ENCODE measurements at regions of chr1 and their contacts with region 1.

Region 1: DNA sequence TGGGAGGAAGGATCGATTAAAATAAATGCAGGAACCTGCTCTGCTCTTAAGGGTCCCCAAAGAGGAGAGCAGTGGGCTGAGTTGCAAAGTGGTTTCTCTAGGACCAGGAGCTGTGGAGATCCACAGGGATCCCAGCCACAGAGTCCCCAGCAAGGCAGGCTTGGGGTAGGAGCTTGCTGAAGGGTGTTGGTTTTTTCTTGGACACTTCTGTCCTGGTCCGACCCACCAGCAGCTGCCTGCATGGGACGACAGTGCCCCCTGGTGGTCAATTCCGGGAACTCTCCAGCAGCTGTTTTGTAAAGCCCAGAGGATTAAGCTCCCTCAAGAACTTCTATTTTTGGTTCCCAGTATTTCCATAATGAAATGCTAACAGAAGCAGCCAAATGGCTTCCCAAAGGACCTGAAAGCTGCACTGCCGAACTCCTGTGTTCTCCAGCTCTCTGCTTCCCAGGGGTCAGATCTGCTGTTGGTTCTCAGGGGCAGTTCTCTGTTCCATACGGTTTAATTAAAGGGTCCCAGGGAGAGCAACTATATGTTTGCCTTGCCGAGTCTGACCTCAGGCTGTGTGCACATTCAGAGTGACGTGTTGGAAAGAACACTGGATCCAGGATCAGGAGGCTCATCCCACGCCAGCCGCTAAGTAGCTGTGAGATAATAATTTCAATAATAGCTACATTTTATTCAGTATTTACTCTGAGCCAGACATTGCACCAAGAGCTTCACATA is 23.2 kb downstream of the NENF start:
- DNase-seq: peak; percentile 80 to 82
- ATAC-seq: peak; percentile 84 to 91
- H3K4me3 ChIP-seq: no peak overlapping the region
- H3K27ac ChIP-seq: no peak overlapping the region
- H3K4me1 ChIP-seq: no peaks in the 10 kb centered on the region
- CTCF ChIP-seq: peak; percentile 97
- EP300 ChIP-seq: no peak
- POLR2A ChIP-seq: no peak
- RAD21 ChIP-seq: peak; percentile 96 to 98

Region 2: GRCh38 chr1:212045981-212046380 is 410.0 kb before region 1 on chr1:
- CTCF ChIA-PET with region 1: interaction called, 13 read pairs
- POLR2A ChIA-PET with region 1: no interaction called
- DNase-seq: no peak
- ATAC-seq: no peak
- H3K4me3 ChIP-seq: no peak overlapping the region
- H3K27ac ChIP-seq: no peak overlapping the region
- H3K4me1 ChIP-seq: peaks cover 3% of the 10 kb centered on the region
- CTCF ChIP-seq: no peak
- EP300 ChIP-seq: no peak
- POLR2A ChIP-seq: no peak
- RAD21 ChIP-seq: no peak

Region 3: GRCh38 chr1:212077051-212077450 is 378.9 kb before region 1 on chr1:
- CTCF ChIA-PET with region 1: interaction called, 230 read pairs
- POLR2A ChIA-PET with region 1: interaction called, 8 read pairs
- DNase-seq: no peak
- ATAC-seq: no peak
- H3K4me3 ChIP-seq: no peak overlapping the region
- H3K27ac ChIP-seq: no peak overlapping the region
- H3K4me1 ChIP-seq: no peaks in the 10 kb centered on the region
- CTCF ChIP-seq: no peak
- EP300 ChIP-seq: no peak
- POLR2A ChIP-seq: no peak
- RAD21 ChIP-seq: no peak

Region 4: DNA sequence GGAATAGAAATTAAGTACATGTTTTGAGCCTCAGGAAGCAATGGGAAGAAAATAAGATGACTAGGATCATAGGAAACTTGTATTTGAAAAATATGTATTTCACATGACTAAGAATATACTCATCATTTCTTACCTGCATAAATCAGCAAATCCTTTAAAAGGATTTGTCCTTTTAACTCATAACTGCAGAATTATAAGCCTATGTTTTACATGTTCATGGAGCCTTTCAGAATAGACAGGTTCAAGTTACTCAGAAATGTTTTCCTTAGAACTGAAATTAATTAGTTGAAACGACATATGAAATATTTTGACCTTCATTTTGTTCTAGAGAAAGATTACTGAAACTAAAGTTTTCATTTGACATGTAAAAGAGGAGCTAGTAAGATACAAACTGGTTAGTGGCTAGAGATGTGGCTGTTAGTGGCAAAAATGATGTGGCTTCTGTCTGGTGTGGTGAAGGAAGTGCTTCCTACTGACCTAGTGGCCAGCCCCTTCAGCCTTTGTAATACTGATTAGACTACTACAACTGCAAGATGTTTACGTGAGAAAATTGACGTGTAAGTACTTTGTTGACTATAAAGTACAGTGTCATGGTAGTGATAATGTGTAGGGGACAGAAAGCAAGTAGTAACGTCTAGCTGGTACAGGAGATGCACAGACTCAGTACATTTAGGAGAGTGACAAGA is 96.0 kb before region 1 on chr1:
- CTCF ChIA-PET with region 1: interaction called, 25 read pairs
- POLR2A ChIA-PET with region 1: no interaction called
- DNase-seq: no peak
- ATAC-seq: no peak
- H3K4me3 ChIP-seq: no peak overlapping the region
- H3K27ac ChIP-seq: no peak overlapping the region
- H3K4me1 ChIP-seq: no peaks in the 10 kb centered on the region
- CTCF ChIP-seq: no peak
- EP300 ChIP-seq: no peak
- POLR2A ChIP-seq: no peak
- RAD21 ChIP-seq: no peak

Region 5: GRCh38 chr1:212426311-212426710 is 29.7 kb before region 1 on chr1:
- CTCF ChIA-PET with region 1: interaction called, 19 read pairs
- POLR2A ChIA-PET with region 1: no interaction called
- DNase-seq: no peak
- ATAC-seq: no peak
- H3K4me3 ChIP-seq: no peak overlapping the region
- H3K27ac ChIP-seq: no peak overlapping the region
- H3K4me1 ChIP-seq: no peaks in the 10 kb centered on the region
- CTCF ChIP-seq: no peak
- EP300 ChIP-seq: no peak
- POLR2A ChIP-seq: no peak
- RAD21 ChIP-seq: no peak

Region 6: GRCh38 chr1:212469701-212470458 is 13.9 kb after region 1 on chr1:
- CTCF ChIA-PET with region 1: interaction called, 141 read pairs
- POLR2A ChIA-PET with region 1: interaction called, 3 read pairs
- DNase-seq: peak; percentile 56 to 78
- ATAC-seq: peak; percentile 91 to 96
- H3K4me3 ChIP-seq: no peak overlapping the region
- H3K27ac ChIP-seq: peak overlapping the region; percentile 65 to 76
- H3K4me1 ChIP-seq: peaks cover 14% of the 10 kb centered on the region; the same call in 2 of the 3 replicates
- CTCF ChIP-seq: no peak
- EP300 ChIP-seq: no peak; a peak in 1 of 5 replicates
- POLR2A ChIP-seq: no peak
- RAD21 ChIP-seq: no peak

Region 7: GRCh38 chr1:212712451-212713303 is 256.7 kb after region 1 on chr1:
- CTCF ChIA-PET with region 1: no interaction called
- POLR2A ChIA-PET with region 1: no interaction called
- DNase-seq: no peak
- ATAC-seq: peak in 1 of 2 experiments; percentile 23; a peak in 1 of 6 replicates
- H3K4me3 ChIP-seq: no peak overlapping the region
- H3K27ac ChIP-seq: no peak overlapping the region
- H3K4me1 ChIP-seq: 0 out of 3 replicates have a peak, but pooled peaks cover 5% of the 10 kb centered on the region
- CTCF ChIP-seq: no peak
- EP300 ChIP-seq: no peak
- POLR2A ChIP-seq: no peak
- RAD21 ChIP-seq: no peak